ENCODE measurements at regions of chr6 and their contacts with region 1.

Region 1: GRCh38 chr6:2841264-2842138 is at the start of gene SERPINB1:
- DNase-seq: peak; percentile 95 to 96
- ATAC-seq: peak; percentile 82
- total RNA-seq, gene SERPINB1: 168 to 208 TPM

Region 2: GRCh38 chr6:2791124-2791974 is 50.2 kb before region 1 on chr6:
- intact Hi-C with region 1: loop called in 1 of 2 experiments (anchors 10 kb)
- DNase-seq: peak; percentile 70 to 72
- ATAC-seq: peak; percentile 89

Region 3: DNA sequence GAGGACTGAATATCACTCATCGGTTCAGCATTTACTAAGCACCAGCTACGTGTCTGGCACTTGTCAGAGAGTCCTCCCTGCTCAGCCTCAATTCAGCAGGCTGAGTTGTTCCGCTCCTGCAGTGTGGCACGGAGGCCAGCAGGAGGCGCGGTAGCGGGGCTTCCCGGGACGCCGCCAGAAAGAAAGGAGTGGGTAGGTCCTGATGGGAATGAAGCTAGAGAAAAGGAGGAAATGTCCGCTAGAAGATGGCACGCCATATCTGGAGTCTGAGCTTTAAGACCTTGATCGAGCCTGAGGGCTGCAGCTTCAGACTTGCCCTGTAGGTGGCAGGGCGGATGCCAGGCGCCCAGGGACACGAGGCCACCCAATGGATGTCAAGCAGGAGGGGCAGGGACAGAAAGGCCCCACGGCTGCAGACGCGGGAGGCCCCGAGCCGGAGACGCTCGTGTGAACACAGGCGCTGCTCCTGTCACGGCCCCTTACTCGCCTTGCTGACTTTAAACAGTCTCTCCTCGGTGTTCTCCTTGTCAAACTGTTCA is 111.1 kb after region 1 on chr6:
- intact Hi-C with region 1: no loop called
- DNase-seq: peak; percentile 84 to 86
- ATAC-seq: peak; percentile 97

Measured in left colon (tissue), 2 donors.